Activated CD4-positive, alpha-beta T cell treated with anti-CD3 and anti-CD28 coated beads, Interleukin-2, amount 10 ng/mL, durations not matched to agents 24 days and 14 days (primary cell): ENCODE measurements at regions of chr9 and their contacts with region 1.

Region 1: GRCh38 chr9:88388172-88388885 is at the start of gene SPIN1:
- DNase-seq: peak; percentile 95
- H3K4me3 Mint-ChIP-seq: peak within 1 kb of the TSS; percentile 92
- H3K27ac Mint-ChIP-seq: peak within 1 kb of the TSS; percentile 96
- H3K4me1 Mint-ChIP-seq: peaks cover 29% of the 10 kb centered on the region
- H3K27me3 Mint-ChIP-seq: peaks cover 1% of the 10 kb centered on the region
- total RNA-seq, gene SPIN1: 29.5 and 31.4 TPM in 2 replicates

Region 2: DNA sequence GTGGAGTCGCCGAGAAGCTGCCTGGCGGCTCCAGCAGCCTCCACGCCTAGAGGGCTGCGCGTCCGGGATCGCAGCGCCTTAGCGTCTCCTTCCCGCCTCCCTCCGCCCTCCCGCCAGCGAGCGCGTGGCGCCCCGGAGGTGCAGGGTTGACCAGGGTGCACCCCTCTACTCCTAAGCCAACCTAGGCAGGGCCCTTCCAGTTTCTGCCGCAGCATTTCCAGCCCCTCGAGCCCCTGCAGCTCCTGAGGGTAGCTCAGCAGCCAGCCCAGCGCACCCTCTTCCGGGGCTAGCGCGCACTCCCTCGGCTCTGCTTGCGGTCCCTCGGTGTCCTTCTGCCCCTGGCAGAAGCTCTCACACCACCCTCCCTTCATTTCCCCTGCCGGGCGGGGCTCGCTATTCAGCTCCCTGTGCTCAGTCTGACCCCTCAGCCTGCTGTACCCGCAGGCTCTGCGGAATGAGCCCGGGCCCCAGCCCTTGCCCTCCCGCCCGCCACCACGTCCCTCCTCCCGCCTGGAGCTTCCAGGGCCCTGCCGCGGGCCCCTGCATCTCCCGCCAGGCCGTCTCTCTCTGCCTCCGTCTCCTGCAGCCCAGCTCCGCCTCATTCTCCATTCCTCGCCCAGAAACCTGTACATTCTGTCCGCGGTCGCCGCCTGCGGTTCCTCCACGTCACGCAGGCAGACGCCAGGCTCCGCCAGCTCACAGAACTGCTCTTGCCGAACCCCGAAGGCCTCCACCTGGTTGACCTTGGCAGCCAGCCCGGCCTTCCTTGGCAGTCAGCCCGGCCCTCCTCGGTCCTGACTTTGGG is 311.8 kb before region 1 on chr9:
- intact Hi-C with region 1: no loop called
- DNase-seq: peak; percentile 75
- H3K4me3 Mint-ChIP-seq: peak overlapping the region; percentile 81
- H3K27ac Mint-ChIP-seq: peak overlapping the region; percentile 35
- H3K4me1 Mint-ChIP-seq: peaks cover 13% of the 10 kb centered on the region
- H3K27me3 Mint-ChIP-seq: peaks cover 68% of the 10 kb centered on the region

Region 3: DNA sequence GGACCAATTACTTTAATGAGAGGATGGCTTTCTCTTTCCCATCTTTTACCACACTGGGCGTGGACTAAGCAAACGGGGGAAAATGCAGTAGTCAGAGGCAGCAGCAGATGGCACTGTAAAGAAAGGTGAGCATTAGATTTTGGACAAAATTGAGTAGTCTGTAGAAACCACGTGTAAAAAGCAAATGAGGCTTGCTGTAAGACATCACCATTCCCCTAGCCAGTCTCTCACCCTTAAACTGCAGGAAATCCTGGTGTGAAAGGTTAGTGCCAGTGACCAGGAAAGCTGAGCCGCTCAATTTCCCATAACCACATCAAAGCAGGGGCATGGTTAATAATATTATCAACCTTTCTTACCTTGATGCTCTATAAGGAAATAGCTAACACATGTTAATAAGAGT is 281.8 kb before region 1 on chr9:
- intact Hi-C with region 1: loop called (anchors 1 kb)
- DNase-seq: peak; percentile 77
- H3K4me3 Mint-ChIP-seq: no peak overlapping the region
- H3K27ac Mint-ChIP-seq: no peak overlapping the region
- H3K4me1 Mint-ChIP-seq: peaks cover 2% of the 10 kb centered on the region
- H3K27me3 Mint-ChIP-seq: peaks cover 35% of the 10 kb centered on the region

Region 4: GRCh38 chr9:88258027-88258426 is 130.3 kb before region 1 on chr9:
- intact Hi-C with region 1: no loop called
- DNase-seq: no peak
- H3K4me3 Mint-ChIP-seq: no peak overlapping the region
- H3K27ac Mint-ChIP-seq: no peak overlapping the region
- H3K4me1 Mint-ChIP-seq: peaks cover 5% of the 10 kb centered on the region
- H3K27me3 Mint-ChIP-seq: peaks cover 4% of the 10 kb centered on the region

Region 5: DNA sequence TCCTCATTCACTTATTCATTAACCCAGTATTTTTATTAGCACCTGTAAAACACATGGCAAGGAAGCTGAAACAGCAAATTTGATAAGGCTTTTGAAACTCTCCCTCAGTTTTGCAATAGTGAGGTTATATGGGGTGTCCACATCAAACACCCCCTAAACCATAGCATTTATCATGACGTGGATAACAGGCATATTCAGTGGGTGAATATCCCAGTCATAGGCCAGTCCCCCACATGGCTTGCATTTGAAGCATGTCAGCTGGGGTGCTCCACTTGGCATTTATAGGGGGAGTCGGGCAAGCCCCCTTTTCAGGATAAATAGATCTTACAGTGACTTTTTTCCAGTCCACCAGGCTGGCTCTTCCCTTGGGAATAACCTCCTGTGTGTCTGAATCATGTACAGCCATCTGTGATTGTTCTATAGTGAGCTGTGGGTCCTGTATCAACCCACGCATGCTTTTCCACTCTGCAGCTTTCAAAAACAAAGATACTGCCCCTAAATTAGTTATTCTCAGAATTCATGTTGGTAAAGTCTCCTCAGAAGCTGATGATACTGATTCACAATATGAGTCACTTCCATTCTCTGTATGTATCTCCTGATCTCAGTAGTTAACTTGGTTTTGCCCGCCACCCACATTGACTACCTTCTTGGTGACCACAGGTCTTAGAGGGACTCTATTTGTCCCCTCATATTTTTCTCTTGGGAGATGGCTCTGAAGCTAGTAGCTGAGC is 84.4 kb before region 1 on chr9:
- intact Hi-C with region 1: loop called (anchors 2 kb)
- DNase-seq: peak; percentile 89
- H3K4me3 Mint-ChIP-seq: peak overlapping the region; percentile 62
- H3K27ac Mint-ChIP-seq: peak overlapping the region; percentile 92
- H3K4me1 Mint-ChIP-seq: peaks cover 53% of the 10 kb centered on the region
- H3K27me3 Mint-ChIP-seq: no peaks in the 10 kb centered on the region

Region 6: DNA sequence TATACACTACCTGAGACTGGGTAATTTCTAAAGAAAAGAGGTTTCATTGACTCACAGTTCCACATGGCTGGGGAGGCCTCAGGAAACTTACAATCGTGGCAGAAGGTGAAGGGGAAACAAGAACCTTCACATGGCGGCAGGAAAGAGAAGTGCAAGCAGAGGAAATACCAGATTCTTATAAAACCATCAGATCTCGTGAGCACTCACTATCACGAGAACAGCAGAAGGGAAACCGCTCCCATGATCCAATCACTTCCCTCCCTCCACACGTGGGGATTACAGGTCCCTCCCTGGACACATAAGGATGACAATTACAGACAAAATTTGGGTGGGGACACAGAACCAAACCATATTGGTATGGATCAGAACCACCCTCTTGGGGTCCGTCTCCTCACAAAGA is 44.3 kb before region 1 on chr9:
- intact Hi-C with region 1: no loop called
- DNase-seq: no peak
- H3K4me3 Mint-ChIP-seq: no peak overlapping the region
- H3K27ac Mint-ChIP-seq: no peak overlapping the region
- H3K4me1 Mint-ChIP-seq: peaks cover 4% of the 10 kb centered on the region
- H3K27me3 Mint-ChIP-seq: peaks cover 2% of the 10 kb centered on the region

Region 7: GRCh38 chr9:88433583-88434255 is 45.4 kb after region 1 on chr9:
- intact Hi-C with region 1: loop called (anchors 1 kb)
- DNase-seq: peak; percentile 70
- H3K4me3 Mint-ChIP-seq: peak overlapping the region; percentile 56
- H3K27ac Mint-ChIP-seq: peak overlapping the region; percentile 83
- H3K4me1 Mint-ChIP-seq: peaks cover 40% of the 10 kb centered on the region
- H3K27me3 Mint-ChIP-seq: no peaks in the 10 kb centered on the region

Region 8: DNA sequence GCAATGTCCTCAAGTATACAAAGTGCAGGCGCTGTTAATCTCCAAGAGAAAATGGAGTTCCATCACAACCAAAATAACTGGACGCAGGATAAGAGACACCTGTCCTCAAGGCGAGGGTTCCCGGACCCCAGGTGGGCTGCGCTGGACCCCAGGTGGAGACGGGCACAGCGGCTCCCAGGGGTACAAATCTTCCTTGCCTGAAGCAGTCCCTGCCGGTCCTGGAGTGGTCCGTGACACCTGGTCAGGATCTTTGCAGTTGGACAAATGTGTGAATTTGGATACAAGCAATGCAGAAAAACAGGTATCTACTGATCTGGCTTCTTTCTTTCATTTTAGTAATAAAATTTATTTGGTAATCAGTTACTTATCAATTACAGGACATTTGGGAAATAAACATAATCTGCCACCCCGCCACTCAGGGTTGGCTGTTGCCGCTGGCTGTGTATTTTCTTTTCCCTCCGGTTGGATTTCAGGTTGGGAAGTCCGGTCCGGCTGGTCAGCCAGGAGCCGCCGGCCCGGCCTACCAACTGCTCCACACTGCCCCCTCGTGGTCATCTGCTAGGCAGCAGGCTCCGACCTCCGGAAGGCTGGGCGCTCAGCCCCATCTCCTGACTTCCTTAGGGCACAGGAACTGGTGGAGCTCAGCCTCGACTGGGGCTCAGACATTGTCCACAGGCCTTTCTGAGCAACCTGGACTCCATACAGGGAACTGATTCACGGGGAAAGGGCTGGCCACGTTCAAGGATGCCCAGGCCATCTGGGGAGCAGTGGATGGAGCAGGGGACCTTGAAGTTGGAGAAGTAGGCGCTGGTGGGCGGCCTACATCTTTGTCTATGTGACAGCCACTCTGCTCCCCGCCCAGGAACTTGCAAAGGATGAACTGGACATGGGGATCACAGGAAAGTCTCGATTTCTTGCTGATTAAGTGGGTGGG is 190.1 kb after region 1 on chr9:
- intact Hi-C with region 1: loop called (anchors 1 kb)
- DNase-seq: peak; percentile 91
- H3K4me3 Mint-ChIP-seq: peak overlapping the region; percentile 70
- H3K27ac Mint-ChIP-seq: no peak overlapping the region
- H3K4me1 Mint-ChIP-seq: peaks cover 6% of the 10 kb centered on the region
- H3K27me3 Mint-ChIP-seq: peaks cover 20% of the 10 kb centered on the region

Region 9: GRCh38 chr9:89059925-89060506 is 671.7 kb after region 1 on chr9:
- intact Hi-C with region 1: no loop called
- DNase-seq: no peak
- H3K4me3 Mint-ChIP-seq: no peak overlapping the region
- H3K27ac Mint-ChIP-seq: no peak overlapping the region
- H3K4me1 Mint-ChIP-seq: no peaks in the 10 kb centered on the region
- H3K27me3 Mint-ChIP-seq: peaks cover 2% of the 10 kb centered on the region